CD8-positive, alpha-beta T cell (primary cell): ENCODE measurements at regions of chr9 and their contacts with region 1.

Region 1: GRCh38 chr9:104863180-104863883 is 64.6 kb downstream of the ABCA1 start:
- DNase-seq: peak; percentile 9 to 73 (median 41)
- ATAC-seq: peak; percentile 91
- H3K4me3 ChIP-seq: no peak overlapping the region
- H3K4me3 Mint-ChIP-seq: no peak overlapping the region
- H3K27ac ChIP-seq: no peak overlapping the region
- H3K27ac Mint-ChIP-seq: no peak overlapping the region
- H3K4me1 ChIP-seq: no peaks in the 10 kb centered on the region
- H3K4me1 Mint-ChIP-seq: peaks cover 4% of the 10 kb centered on the region
- H3K27me3 ChIP-seq: no peaks in the 10 kb centered on the region
- H3K27me3 Mint-ChIP-seq: peaks cover 4% of the 10 kb centered on the region
- CTCF ChIP-seq: peak; percentile 82

Region 2: GRCh38 chr9:104808035-104808614 is 55.2 kb before region 1 on chr9:
- CTCF ChIA-PET with region 1: no interaction called
- POLR2A ChIA-PET with region 1: no interaction called
- intact Hi-C with region 1: no loop called
- DNase-seq: peak in 1 of 9 experiments; percentile 11
- ATAC-seq: no peak
- H3K4me3 ChIP-seq: no peak overlapping the region
- H3K4me3 Mint-ChIP-seq: no peak overlapping the region
- H3K27ac ChIP-seq: no peak overlapping the region
- H3K27ac Mint-ChIP-seq: no peak overlapping the region
- H3K4me1 ChIP-seq: no peaks in the 10 kb centered on the region
- H3K4me1 Mint-ChIP-seq: no peaks in the 10 kb centered on the region
- H3K27me3 ChIP-seq: no peaks in the 10 kb centered on the region
- H3K27me3 Mint-ChIP-seq: no peaks in the 10 kb centered on the region
- CTCF ChIP-seq: no peak

Region 3: DNA sequence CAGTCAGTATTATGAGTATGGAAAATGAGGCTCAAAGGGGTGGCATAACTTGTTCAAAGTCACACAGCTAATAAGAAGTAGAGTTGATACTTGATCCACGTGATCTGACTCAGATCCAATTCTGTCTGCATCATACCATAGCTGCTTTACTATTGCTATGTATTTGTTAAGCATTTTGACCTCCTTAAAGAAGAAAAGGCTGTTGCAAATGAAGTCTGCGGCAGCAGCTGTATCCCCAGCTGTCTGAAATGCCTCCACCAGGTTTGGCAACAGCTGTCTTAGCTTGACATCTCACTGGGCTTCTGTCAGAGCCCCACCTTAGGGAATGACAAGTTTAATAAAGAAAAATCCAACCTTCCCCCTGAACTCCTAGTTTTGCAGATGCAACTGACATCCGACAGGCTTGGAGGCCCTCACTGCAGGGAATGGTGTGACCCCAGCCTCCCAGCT is 305.6 kb after region 1 on chr9:
- CTCF ChIA-PET with region 1: interaction called, 11 read pairs
- POLR2A ChIA-PET with region 1: no interaction called
- intact Hi-C with region 1: no loop called
- DNase-seq: no peak
- ATAC-seq: no peak
- H3K4me3 ChIP-seq: no peak overlapping the region
- H3K4me3 Mint-ChIP-seq: no peak overlapping the region
- H3K27ac ChIP-seq: no peak overlapping the region
- H3K27ac Mint-ChIP-seq: no peak overlapping the region
- H3K4me1 ChIP-seq: no peaks in the 10 kb centered on the region
- H3K4me1 Mint-ChIP-seq: no peaks in the 10 kb centered on the region
- H3K27me3 ChIP-seq: no peaks in the 10 kb centered on the region
- H3K27me3 Mint-ChIP-seq: peaks cover 9% of the 10 kb centered on the region
- CTCF ChIP-seq: no peak

Region 4: DNA sequence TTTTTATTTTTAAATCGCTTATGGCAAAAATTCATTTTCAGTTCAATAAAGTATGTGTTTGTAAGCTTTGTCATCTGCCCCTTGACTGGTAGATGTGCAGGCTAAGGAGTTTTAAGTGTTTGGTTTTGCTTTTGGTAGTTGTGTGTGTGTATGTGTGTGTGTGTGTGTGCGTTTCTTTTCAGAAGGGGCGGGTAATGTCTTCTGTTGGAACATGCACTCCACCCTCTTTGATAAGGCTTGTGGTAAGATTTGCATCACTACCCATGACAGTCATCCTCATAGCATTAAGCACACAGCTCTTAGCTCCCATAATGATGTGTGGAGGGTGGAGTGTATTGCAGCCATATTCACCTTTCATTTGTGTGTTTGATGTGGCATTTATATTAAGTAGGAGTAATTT is 492.4 kb after region 1 on chr9:
- CTCF ChIA-PET with region 1: no interaction called
- POLR2A ChIA-PET with region 1: no interaction called
- intact Hi-C with region 1: loop called in 1 of 2 experiments (anchors 5 kb)
- DNase-seq: peak in 3 of 9 experiments; percentile 3 to 33 (median 20)
- ATAC-seq: peak; percentile 86
- H3K4me3 ChIP-seq: no peak overlapping the region
- H3K4me3 Mint-ChIP-seq: no peak overlapping the region
- H3K27ac ChIP-seq: no peak overlapping the region
- H3K27ac Mint-ChIP-seq: no peak overlapping the region
- H3K4me1 ChIP-seq: no peaks in the 10 kb centered on the region
- H3K4me1 Mint-ChIP-seq: peaks cover 2% of the 10 kb centered on the region
- H3K27me3 ChIP-seq: no peaks in the 10 kb centered on the region
- H3K27me3 Mint-ChIP-seq: no peaks in the 10 kb centered on the region
- CTCF ChIP-seq: no peak